Testis (tissue), 5 donors: ENCODE measurements at regions of chr2 and their contacts with region 1.

Region 1: DNA sequence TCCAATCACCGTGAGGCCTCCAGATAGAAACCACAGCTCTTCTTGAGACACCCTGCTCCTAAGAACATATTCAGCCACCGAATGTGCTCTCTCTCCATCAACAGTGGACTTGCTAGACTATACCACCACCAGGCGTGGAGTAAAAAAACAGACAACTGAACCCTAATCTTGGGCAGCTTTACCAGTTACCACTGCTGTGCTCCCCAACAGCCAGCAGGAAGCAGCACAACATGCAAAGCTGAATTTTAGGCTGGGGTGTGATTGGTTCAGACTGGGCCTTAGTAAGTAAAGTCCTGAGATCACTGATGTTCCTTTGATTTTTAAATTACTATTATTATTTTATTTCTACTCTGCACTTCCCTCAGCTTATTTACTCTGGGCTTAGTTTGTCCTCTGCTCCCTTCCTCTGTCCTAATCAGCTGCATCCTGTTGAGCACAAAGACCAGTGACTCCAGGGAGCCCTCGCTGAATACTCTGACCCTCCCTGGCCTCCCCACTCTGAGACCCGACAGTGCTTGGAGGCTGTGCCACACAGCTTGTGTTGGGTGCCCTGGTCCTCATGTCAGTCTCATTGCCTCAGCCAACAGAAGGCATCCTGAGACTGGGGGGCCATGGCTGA is 21.9 kb downstream of the MRPL35 start:
- DNase-seq: peak; percentile 50
- H3K4me3 ChIP-seq: no peak overlapping the region
- H3K27ac ChIP-seq: peak overlapping the region; percentile 9 to 34
- H3K4me1 ChIP-seq: peaks cover 49% of the 10 kb centered on the region
- H3K27me3 ChIP-seq: no peaks in the 10 kb centered on the region
- CTCF ChIP-seq: peak; percentile 49 to 83 (median 56)
- POLR2A ChIP-seq: no peak

Region 2: GRCh38 chr2:86368161-86368824 is 147.1 kb after region 1 on chr2:
- intact Hi-C with region 1: loop called (anchors 10 kb)
- DNase-seq: peak; percentile 47
- H3K4me3 ChIP-seq: no peak overlapping the region
- H3K27ac ChIP-seq: peak overlapping the region in 1 of 2 donors; percentile 3
- H3K4me1 ChIP-seq: peaks cover 31% of the 10 kb centered on the region
- H3K27me3 ChIP-seq: no peaks in the 10 kb centered on the region
- CTCF ChIP-seq: peak in 2 of 3 experiments; percentile 34 to 61
- POLR2A ChIP-seq: no peak